Right cardiac atrium (tissue), 5 donors: ENCODE measurements at regions of chr19 and their contacts with region 1.

Region 1: DNA sequence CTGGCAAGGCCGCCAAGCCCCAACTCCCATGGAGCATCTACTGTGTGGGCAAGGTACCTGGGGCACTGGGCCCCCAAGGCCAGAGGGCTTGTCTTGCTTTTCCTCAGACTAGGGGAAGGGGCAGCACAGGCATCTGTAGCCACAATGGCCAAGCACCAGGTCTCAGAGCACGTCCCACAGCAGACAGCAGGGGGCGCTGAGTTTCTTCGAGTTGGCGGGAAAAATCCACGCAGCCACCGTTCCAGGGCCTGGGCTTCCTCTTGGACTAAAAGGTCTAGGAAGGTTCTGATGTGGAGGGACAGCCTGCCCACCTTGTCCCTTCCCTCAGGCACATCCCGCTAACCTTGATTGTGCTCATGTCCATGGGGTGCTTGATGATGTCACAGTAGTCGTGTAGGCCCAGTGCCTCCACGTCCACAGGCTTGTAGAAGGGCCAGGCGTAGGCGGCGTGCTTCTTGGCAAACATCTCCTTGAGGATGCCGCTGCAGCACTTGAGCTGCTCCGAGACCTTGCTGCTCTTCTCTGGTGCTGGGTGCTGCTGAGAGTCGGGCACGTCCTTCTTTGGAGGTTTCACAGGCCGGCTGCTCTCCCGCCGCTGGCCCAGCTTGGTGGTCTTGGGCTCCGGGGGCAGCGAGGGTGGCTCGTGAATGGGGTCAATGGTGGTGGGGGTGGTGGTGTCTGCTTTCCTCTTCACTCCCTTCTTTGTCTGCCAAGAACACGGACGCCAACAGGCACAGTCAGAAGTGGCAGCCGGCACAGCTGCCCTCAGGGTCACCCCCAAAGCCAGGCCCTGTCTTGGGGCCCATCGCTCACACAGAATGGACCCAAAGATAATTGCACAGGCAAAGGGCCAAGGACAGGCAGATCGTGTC is 32.0 kb upstream of the EPHX3 start:
- DNase-seq: peak; percentile 79 to 92 (median 91)
- ATAC-seq: peak; percentile 4 to 23
- H3K4me3 ChIP-seq: no peak overlapping the region
- H3K27ac ChIP-seq: no peak overlapping the region
- H3K4me1 ChIP-seq: peaks cover 23% of the 10 kb centered on the region
- H3K27me3 ChIP-seq: no peaks in the 10 kb centered on the region

Region 2: DNA sequence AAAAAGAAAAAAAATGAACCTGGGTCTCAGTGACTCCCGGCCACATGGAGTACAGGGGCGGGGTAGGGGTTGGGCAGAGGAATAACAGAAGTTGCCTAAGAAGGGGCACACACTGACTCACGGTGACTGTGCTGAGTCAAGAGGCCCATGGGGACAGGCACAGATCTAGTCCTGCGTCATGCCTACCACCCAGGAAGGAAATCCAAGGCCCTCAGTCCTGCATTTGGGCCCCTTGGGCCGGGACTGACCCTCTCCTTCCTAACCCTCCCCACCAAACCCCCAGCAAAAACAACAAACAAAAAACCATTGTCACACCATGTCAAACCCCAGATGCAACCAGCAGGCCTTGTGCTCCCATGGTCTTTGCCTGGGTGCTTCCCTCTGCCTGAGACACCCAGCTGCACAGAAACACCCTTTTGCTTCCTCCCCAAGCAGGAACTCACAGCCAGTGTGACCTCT is 53.9 kb before region 1 on chr19:
- intact Hi-C with region 1: no loop called
- DNase-seq: peak; percentile 57 to 72 (median 64)
- ATAC-seq: peak; percentile 64 to 86
- H3K4me3 ChIP-seq: no peak overlapping the region
- H3K27ac ChIP-seq: peak overlapping the region; percentile 59
- H3K4me1 ChIP-seq: no peaks in the 10 kb centered on the region
- H3K27me3 ChIP-seq: no peaks in the 10 kb centered on the region

Region 3: GRCh38 chr19:15332311-15332996 is 68.2 kb after region 1 on chr19 and contains the start of gene BRD4:
- intact Hi-C with region 1: loop called in 2 of 4 experiments (anchors 10 kb)
- DNase-seq: peak; percentile 71 to 91 (median 90)
- ATAC-seq: peak; percentile 76 to 80
- H3K4me3 ChIP-seq: peak within 1 kb of the TSS; percentile 94
- H3K27ac ChIP-seq: peak within 1 kb of the TSS; percentile 92
- H3K4me1 ChIP-seq: peaks cover 8% of the 10 kb centered on the region
- H3K27me3 ChIP-seq: no peaks in the 10 kb centered on the region
- total RNA-seq, gene BRD4: 51.1 to 62.8 (median 59.2) TPM

Region 4: DNA sequence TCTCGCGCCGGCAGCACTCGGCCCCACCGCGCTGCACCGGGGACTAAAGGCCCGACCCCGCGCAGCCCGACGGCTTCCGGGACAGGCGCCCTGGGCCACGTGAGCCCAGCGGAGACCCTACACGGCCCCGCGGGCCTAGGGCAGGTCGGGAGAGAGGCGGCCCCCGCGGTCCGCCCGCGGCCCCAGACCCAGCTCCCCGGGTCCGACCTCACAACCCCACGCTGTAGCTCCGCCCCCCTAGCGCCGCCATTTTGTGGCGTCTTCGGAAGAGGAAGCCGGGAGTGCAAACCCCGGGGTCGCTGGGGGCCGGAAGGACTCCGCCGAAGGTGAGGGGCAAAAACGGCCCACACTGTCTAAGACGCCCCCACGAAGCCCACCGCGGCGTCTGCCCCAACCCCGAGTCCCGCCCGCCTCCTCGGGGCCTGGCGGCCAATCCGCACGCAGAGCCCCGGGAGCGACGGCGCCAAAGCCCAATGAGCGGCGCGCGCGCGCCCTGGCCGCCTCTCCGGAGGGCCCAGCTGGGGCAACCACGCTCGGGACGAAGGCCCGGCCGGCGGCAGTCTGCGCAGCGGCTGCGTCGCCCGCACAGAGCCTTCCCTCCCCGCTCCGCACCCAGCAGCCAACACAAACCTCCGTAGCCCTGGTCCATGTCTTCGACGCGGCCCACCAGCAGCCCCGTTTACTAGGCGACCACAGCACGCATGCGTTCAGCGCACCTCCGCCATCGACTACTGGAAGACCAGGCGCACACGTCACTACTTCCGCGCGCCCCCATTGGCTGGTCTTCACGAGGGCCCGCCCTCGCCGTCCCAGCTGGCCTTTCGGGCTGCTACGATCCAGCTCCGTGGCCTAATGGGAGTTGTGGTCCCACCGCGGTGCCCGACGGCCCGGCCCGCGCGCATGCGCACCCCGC is 115.0 kb after region 1 on chr19 and contains the start of gene AKAP8:
- intact Hi-C with region 1: loop called in 2 of 4 experiments (anchors 2 to 10 kb)
- DNase-seq: peak; percentile 99 to 100 (median 99)
- ATAC-seq: peak; percentile 97
- H3K4me3 ChIP-seq: peak within 1 kb of the TSS; percentile 86
- H3K27ac ChIP-seq: peak within 1 kb of the TSS; percentile 77
- H3K4me1 ChIP-seq: peaks cover 11% of the 10 kb centered on the region
- H3K27me3 ChIP-seq: no peaks in the 10 kb centered on the region
- total RNA-seq, gene AKAP8: 17.1 to 24.9 (median 21.4) TPM